ENCODE measurements at regions of chr3 and their contacts with region 1.

Region 1: DNA sequence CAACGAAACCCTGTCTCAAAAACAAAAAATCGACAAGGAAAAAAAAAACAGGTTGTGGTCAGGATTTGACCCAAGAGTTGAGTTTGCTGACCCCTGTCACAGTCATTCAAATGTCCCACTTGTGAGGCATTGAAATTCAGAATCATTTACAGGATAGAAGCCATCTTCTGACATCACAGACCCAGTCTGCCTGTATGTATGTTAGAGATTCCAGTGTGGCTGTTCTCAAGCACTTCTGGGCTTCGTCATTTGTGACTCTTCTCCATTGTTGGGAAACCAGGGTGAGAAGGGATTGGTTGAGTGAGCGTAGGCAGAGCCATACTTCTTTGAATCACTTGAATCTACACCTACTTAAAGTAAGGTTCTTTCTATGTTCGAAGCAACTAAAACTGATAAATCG is 57.1 kb downstream of the LMLN start:
- H3K4me3 ChIP-seq: no peak overlapping the region
- H3K27ac ChIP-seq: no peak overlapping the region
- H3K4me1 ChIP-seq: no peaks in the 10 kb centered on the region
- CTCF ChIP-seq: no peak

Region 2: GRCh38 chr3:197989651-197990050 is 27.4 kb before region 1 on chr3:
- CTCF ChIA-PET with region 1: no interaction called
- POLR2A ChIA-PET with region 1: no interaction called
- H3K4me3 ChIP-seq: no peak overlapping the region
- H3K27ac ChIP-seq: no peak overlapping the region
- H3K4me1 ChIP-seq: no peaks in the 10 kb centered on the region
- CTCF ChIP-seq: no peak

Region 3: DNA sequence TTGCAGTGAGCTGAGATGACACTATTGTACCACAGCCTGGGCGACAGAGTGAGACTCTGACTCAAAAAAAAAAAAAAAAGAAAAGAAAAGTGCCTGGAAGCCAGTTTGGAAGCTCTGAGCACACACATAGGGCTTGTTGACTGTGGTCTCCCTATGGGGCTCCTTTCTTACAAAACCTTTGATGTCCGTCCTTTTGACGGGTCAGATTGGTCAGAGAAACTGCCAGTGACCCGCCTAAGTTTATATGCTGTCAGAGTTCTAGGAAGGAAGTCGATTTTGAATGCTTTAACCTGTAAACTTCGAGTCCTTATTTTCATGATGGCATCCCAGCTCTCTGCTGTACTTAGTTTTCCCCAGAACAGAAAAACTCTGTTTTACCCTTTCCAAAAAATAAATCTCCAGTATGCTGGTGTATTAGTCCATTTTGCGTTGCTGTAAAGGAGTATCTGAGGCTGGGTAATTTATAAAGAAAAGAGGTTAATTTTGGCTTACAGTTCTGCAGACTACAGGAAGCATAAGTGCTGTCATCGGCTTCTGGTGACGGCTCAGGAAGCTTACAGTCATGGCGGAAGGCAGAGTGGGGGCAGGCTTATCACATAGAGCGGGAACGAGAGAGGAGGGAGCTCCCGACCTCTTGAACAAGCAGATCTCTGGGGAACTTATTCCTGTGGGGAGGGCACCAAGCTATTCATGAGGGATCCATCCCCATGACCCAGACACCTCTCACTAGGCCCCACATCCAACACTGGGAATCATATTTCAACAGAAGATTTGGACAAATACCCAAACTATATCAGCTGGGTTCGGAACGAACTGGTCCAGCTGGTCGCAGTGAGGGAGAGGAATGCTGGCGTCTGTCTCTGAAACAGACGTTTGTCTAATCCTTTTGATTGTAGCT is 15.2 kb after region 1 on chr3:
- CTCF ChIA-PET with region 1: no interaction called
- POLR2A ChIA-PET with region 1: interaction called, 10 read pairs
- H3K4me3 ChIP-seq: no peak overlapping the region
- H3K27ac ChIP-seq: no peak overlapping the region
- H3K4me1 ChIP-seq: no peaks in the 10 kb centered on the region; the same call in 1 of the 2 replicates
- CTCF ChIP-seq: no peak

Measured in HEK293 (cell line).